ENCODE measurements at regions of chr3 and their contacts with region 1.

Region 1: GRCh38 chr3:9932843-9933560 is 632 bp upstream of the CRELD1 start:
- DNase-seq: peak; percentile 76 to 88 (median 84)
- ATAC-seq: peak; percentile 74
- H3K4me3 ChIP-seq: peak overlapping the region; percentile 98
- H3K4me3 Mint-ChIP-seq: peak overlapping the region; percentile 71 to 99 (median 98)
- H3K27ac ChIP-seq: peak overlapping the region; percentile 98
- H3K27ac Mint-ChIP-seq: peak overlapping the region; percentile 94 to 100 (median 99)
- H3K4me1 ChIP-seq: peaks cover 25 to 28% of the 10 kb centered on the region in 2 donors
- H3K4me1 Mint-ChIP-seq: peaks cover 30 to 58% (median 48%) of the 10 kb centered on the region in 7 donors
- H3K27me3 ChIP-seq: no peaks in the 10 kb centered on the region
- H3K27me3 Mint-ChIP-seq: no peaks in the 10 kb centered on the region

Region 2: GRCh38 chr3:9525078-9525477 is 407.9 kb before region 1 on chr3:
- CTCF ChIA-PET with region 1: no interaction called
- POLR2A ChIA-PET with region 1: no interaction called
- intact Hi-C with region 1: no loop called
- DNase-seq: no peak
- ATAC-seq: no peak
- H3K4me3 ChIP-seq: no peak overlapping the region
- H3K4me3 Mint-ChIP-seq: no peak overlapping the region
- H3K27ac ChIP-seq: no peak overlapping the region
- H3K27ac Mint-ChIP-seq: no peak overlapping the region
- H3K4me1 ChIP-seq: no peaks in the 10 kb centered on the region
- H3K4me1 Mint-ChIP-seq: no peaks in the 10 kb centered on the region
- H3K27me3 ChIP-seq: no peaks in the 10 kb centered on the region
- H3K27me3 Mint-ChIP-seq: peaks cover 22 to 48% (median 43%) of the 10 kb centered on the region in 5 donors

Region 3: GRCh38 chr3:9731206-9732079 is 201.6 kb before region 1 on chr3 and contains the start of gene BRPF1:
- CTCF ChIA-PET with region 1: no interaction called
- POLR2A ChIA-PET with region 1: interaction called, 8 read pairs
- intact Hi-C with region 1: loop called (anchors 1 kb)
- DNase-seq: peak; percentile 91 to 99 (median 98)
- ATAC-seq: peak; percentile 96
- H3K4me3 ChIP-seq: peak within 1 kb of the TSS; percentile 85
- H3K4me3 Mint-ChIP-seq: peak within 1 kb of the TSS; percentile 91 to 98 (median 93)
- H3K27ac ChIP-seq: peak within 1 kb of the TSS; percentile 88
- H3K27ac Mint-ChIP-seq: peak within 1 kb of the TSS; percentile 86 to 97 (median 95)
- H3K4me1 ChIP-seq: peaks cover 22 to 32% of the 10 kb centered on the region in 2 donors
- H3K4me1 Mint-ChIP-seq: peaks cover 49 to 77% (median 72%) of the 10 kb centered on the region in 7 donors
- H3K27me3 ChIP-seq: no peaks in the 10 kb centered on the region
- H3K27me3 Mint-ChIP-seq: no peaks in the 10 kb centered on the region
- total RNA-seq, gene BRPF1: 32.0 to 42.4 (median 39.5) TPM

Region 4: DNA sequence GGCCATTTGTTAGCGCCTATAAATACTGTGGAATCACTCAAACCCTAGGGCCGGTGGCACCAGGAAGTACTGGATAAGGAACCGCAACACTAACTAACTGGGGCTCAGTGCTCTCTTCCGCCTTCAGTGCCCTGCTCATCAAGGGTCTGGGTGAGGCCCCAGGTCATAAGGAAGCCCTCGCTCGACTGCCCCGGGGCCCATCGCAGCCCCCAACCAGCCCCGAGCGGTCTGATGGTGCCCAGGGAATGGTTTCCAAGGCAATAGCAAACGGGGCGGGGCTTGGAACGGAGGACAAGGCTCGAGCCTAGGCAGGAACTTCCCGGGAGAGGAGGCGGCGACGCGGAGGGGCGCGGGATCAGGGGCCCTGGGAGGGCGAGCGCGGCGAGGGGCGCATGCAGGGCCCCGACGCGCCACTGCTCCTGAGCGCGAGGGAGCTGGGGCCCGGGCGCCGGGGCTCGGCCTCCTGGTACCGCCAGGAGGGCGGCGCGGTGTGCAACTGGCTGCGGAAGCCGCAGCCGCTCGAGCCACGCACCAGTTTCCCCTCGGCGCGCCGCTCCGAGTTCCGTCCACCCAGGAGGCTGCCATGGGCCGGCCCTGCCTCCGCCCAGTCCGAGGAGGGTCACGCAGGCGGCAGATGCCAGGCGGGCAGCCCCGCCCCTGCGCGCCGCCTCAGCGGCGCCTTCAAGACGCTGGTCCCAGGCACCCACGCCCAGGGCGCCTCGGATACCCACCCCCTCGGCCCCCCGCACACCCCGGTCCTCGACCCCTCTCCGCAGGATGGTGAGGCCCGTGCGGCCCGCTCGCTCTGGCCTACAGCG is 123.2 kb before region 1 on chr3 and contains the start of gene TTLL3:
- CTCF ChIA-PET with region 1: no interaction called
- POLR2A ChIA-PET with region 1: interaction called, 11 read pairs
- intact Hi-C with region 1: loop called in 1 of 2 experiments (anchors 2 kb)
- DNase-seq: peak; percentile 33 to 50 (median 43)
- ATAC-seq: peak; percentile 76
- H3K4me3 ChIP-seq: peak within 1 kb of the TSS; percentile 76
- H3K4me3 Mint-ChIP-seq: peak within 1 kb of the TSS; percentile 89 to 96 (median 92)
- H3K27ac ChIP-seq: peak within 1 kb of the TSS; percentile 90
- H3K27ac Mint-ChIP-seq: peak within 1 kb of the TSS; percentile 92 to 98 (median 96)
- H3K4me1 ChIP-seq: peaks cover 21 to 28% of the 10 kb centered on the region in 2 donors
- H3K4me1 Mint-ChIP-seq: peaks cover 31 to 41% (median 38%) of the 10 kb centered on the region in 7 donors
- H3K27me3 ChIP-seq: no peaks in the 10 kb centered on the region
- H3K27me3 Mint-ChIP-seq: no peaks in the 10 kb centered on the region
- total RNA-seq, gene TTLL3: 54.9 to 106 (median 68.0) TPM

Region 5: DNA sequence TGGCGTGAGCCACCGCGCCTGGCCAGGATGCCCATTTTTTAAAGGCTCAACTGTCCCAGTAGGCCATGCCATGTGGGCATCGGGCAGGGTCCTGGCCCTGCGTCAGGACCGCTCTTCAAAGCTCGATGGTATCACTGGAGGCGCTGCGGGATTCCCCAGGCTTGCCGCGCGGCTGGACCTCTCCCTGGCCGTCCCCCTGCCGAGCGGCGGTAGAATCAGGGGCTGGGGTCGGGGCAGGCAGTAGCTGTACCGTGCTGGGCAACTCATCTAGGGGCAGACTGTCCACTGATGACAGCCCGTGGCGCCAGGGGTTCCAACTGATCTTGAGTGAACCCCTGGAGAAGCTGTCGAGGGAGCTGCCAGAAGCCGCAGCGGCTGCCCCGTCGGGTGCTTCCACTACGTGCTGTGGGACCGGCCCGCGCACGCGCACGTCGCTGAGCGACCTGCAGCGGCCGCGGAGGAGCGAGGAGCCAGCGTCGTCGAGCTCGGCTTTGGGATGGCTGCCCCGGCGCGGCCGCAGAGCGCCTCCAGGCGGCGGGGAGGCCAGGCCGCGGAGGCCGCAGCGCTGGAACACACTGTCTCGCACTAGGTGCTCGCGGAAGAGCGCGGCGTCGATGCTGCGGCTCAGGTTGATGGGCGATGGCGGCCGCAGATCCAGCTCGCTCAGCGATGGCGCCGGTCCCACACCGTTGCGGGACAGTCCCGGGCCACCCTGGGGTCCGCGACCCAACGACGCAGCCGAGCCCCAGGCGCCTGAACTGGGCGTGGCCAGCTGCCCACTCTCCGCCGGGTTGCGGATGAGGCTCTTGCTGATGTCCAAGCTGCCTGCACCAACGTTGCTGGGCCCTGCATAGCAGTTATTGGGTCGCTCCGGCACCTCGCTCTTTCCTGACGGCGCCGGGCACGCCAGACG is 13.4 kb after region 1 on chr3:
- CTCF ChIA-PET with region 1: interaction called, 35 read pairs
- POLR2A ChIA-PET with region 1: interaction called, 64 read pairs
- intact Hi-C with region 1: loop called (anchors 1 kb)
- DNase-seq: peak; percentile 70 to 88 (median 80)
- ATAC-seq: peak; percentile 94
- H3K4me3 ChIP-seq: peak overlapping the region; percentile 50
- H3K4me3 Mint-ChIP-seq: peak overlapping the region; percentile 42 to 85 (median 78)
- H3K27ac ChIP-seq: peak overlapping the region; percentile 74
- H3K27ac Mint-ChIP-seq: peak overlapping the region in 8 of 9 donors; percentile 56 to 91 (median 82)
- H3K4me1 ChIP-seq: peaks cover 7% of the 10 kb centered on the region in 2 donors
- H3K4me1 Mint-ChIP-seq: peaks cover 8 to 16% (median 11%) of the 10 kb centered on the region in 7 donors
- H3K27me3 ChIP-seq: no peaks in the 10 kb centered on the region
- H3K27me3 Mint-ChIP-seq: no peaks in the 10 kb centered on the region

Region 6: DNA sequence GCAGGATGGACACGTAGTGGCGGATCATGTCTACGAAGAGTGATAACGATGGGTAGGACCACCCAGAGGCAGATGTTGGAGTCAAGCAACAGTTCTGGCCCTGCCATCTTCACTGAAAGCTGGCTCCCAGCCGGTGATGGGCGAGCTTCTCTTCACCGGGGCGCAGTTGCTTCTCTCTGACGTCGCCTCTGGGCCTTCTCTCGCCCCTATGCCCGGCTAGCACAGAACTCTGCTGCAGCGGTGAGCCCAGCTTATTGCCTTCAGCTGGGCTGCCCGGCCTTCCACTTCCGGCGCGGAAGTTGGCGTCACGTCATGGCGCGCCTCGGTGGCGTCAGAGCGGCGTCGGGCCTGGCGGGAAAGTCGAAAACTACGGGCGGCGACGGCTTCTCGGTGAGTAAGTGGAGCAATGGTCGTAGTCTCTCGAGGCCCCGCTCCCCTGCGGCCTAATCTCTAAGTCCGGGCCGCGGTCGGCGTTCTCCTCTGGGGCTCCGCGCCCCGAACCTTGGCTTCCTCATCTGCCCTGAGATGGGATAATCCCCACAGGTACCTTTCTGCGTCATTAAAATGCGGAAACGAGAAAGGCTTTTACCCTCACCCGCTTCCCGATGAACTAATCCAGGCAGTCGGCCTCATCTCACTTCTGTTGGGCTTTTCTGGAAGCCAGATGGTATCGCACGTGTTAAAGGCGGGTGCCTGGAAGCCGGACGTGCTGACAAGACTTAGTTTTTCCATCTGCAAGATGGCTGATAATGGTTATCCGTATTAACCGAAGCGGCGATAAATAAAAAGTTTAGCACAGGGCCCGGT is 93.3 kb after region 1 on chr3 and contains the start of gene FANCD2:
- CTCF ChIA-PET with region 1: interaction called, 4 read pairs
- POLR2A ChIA-PET with region 1: interaction called, 8 read pairs
- intact Hi-C with region 1: loop called (anchors 1 kb)
- DNase-seq: peak; percentile 88 to 99 (median 94)
- ATAC-seq: peak; percentile 95
- H3K4me3 ChIP-seq: peak within 1 kb of the TSS; percentile 96
- H3K4me3 Mint-ChIP-seq: peak within 1 kb of the TSS; percentile 93 to 99 (median 96)
- H3K27ac ChIP-seq: peak within 1 kb of the TSS; percentile 89
- H3K27ac Mint-ChIP-seq: peak within 1 kb of the TSS; percentile 86 to 98 (median 97)
- H3K4me1 ChIP-seq: peaks cover 11 to 13% of the 10 kb centered on the region in 2 donors
- H3K4me1 Mint-ChIP-seq: peaks cover 0 to 45% (median 29%) of the 10 kb centered on the region in 7 donors
- H3K27me3 ChIP-seq: no peaks in the 10 kb centered on the region
- H3K27me3 Mint-ChIP-seq: no peaks in the 10 kb centered on the region
- total RNA-seq, gene FANCD2: 18.3 to 41.5 (median 34.1) TPM

Region 7: GRCh38 chr3:10242182-10243065 is 309.4 kb after region 1 on chr3:
- CTCF ChIA-PET with region 1: no interaction called
- POLR2A ChIA-PET with region 1: interaction called, 10 read pairs
- intact Hi-C with region 1: no loop called
- DNase-seq: peak; percentile 20 to 93 (median 84)
- ATAC-seq: peak; percentile 98
- H3K4me3 ChIP-seq: peak overlapping the region; percentile 13
- H3K4me3 Mint-ChIP-seq: peak overlapping the region; percentile 75 to 82 (median 77)
- H3K27ac ChIP-seq: peak overlapping the region; percentile 71
- H3K27ac Mint-ChIP-seq: peak overlapping the region; percentile 86 to 96 (median 93)
- H3K4me1 ChIP-seq: peaks cover 33 to 43% of the 10 kb centered on the region in 2 donors
- H3K4me1 Mint-ChIP-seq: peaks cover 40 to 60% (median 54%) of the 10 kb centered on the region in 7 donors
- H3K27me3 ChIP-seq: no peaks in the 10 kb centered on the region
- H3K27me3 Mint-ChIP-seq: no peaks in the 10 kb centered on the region

Region 8: DNA sequence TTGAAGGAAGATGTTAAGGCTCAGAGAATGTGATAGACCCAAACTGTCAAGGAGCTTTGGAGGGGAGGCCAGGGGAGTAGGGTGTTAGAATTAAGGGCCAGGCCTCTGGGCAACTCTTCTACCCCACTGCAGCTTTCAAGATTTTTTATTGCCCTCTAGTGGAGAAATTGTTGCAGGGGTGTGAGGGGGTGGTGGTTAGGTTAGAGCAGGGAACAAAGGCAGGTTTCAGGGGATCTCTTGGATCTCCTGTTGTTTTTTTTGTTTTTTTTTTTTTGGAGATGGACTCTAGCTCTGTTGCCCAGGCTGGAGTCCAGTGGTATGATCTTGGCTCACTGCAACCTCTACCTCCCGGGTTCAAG is 389.3 kb after region 1 on chr3:
- CTCF ChIA-PET with region 1: interaction called, 3 read pairs
- POLR2A ChIA-PET with region 1: interaction called, 21 read pairs
- intact Hi-C with region 1: loop called (anchors 1 kb)
- DNase-seq: peak in 3 of 9 donors; percentile 12 to 32 (median 17)
- ATAC-seq: no peak
- H3K4me3 ChIP-seq: no peak overlapping the region
- H3K4me3 Mint-ChIP-seq: peak overlapping the region in 5 of 10 donors; percentile 5 to 85 (median 32)
- H3K27ac ChIP-seq: no peak overlapping the region
- H3K27ac Mint-ChIP-seq: peak overlapping the region in 8 of 9 donors; percentile 0 to 97 (median 86)
- H3K4me1 ChIP-seq: peaks cover 12 to 22% of the 10 kb centered on the region in 2 donors
- H3K4me1 Mint-ChIP-seq: peaks cover 5 to 40% (median 30%) of the 10 kb centered on the region in 7 donors
- H3K27me3 ChIP-seq: no peaks in the 10 kb centered on the region
- H3K27me3 Mint-ChIP-seq: peaks cover 0 to 27% (median 9%) of the 10 kb centered on the region in 5 donors

Measured in naive thymus-derived CD4-positive, alpha-beta T cell (primary cell).